Sigmoid colon (tissue), 7 donors: ENCODE measurements at regions of chrX and their contacts with region 1.

Region 1: DNA sequence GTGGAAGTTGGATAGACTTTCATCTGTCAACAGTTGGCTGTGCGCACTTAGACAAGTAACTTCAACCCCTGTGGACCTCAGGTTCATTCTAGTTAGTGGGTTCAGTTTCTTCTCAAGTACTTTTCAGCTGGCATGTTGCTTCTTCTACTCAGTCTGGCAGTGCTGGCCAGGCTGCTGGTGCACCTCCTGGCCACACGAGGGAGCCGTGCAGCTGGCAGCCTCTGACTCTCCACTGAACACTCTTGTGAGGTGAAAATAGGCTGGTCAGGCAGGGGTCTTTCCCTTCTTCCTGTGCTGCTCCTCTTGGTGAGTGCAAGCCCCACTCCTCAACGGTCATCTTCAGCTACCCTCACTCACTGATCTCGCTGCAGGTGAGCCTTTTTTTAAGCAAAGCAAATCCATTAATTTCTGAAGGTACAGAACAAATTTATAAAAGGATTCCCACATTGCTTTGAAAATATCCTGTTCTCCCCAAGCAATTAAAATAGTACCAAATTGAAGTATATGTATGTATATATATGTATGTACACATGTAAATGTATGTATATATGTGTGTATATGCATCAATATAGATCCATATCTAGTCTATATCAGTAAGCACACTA is 30.6 kb downstream of the LONRF3 start:
- DNase-seq: peak; percentile 75
- H3K4me3 ChIP-seq: no peak overlapping the region
- H3K27ac ChIP-seq: no peak overlapping the region
- H3K4me1 ChIP-seq: peaks cover 0 to 6% (median 0%) of the 10 kb centered on the region in 4 donors
- H3K27me3 ChIP-seq: no peaks in the 10 kb centered on the region
- CTCF ChIP-seq: peak; percentile 25 to 68 (median 56)
- EP300 ChIP-seq: no peak
- POLR2A ChIP-seq: no peak

Region 2: GRCh38 chrX:119067023-119067739 is 62.2 kb after region 1 on chrX:
- intact Hi-C with region 1: loop called (anchors 5 kb)
- DNase-seq: peak; percentile 77
- H3K4me3 ChIP-seq: no peak overlapping the region
- H3K27ac ChIP-seq: no peak overlapping the region
- H3K4me1 ChIP-seq: no peaks in the 10 kb centered on the region
- H3K27me3 ChIP-seq: no peaks in the 10 kb centered on the region
- CTCF ChIP-seq: peak; percentile 25 to 52 (median 42)
- EP300 ChIP-seq: no peak
- POLR2A ChIP-seq: no peak